ENCODE measurements at regions of chr13 and their contacts with region 1.

Region 1: GRCh38 chr13:52652196-52652979 is at the start of gene SUGT1:
- DNase-seq: peak; percentile 98
- H3K4me3 ChIP-seq: peak within 1 kb of the TSS; percentile 55 to 78
- H3K27ac ChIP-seq: peak within 1 kb of the TSS; percentile 96 to 97
- H3K4me1 ChIP-seq: peaks cover 12% of the 10 kb centered on the region
- H3K27me3 ChIP-seq: no peaks in the 10 kb centered on the region
- CTCF ChIP-seq: peak; percentile 15 to 66 (median 48)
- POLR2A ChIP-seq: peak; percentile 67
- total RNA-seq, gene SUGT1: 34.4 to 47.8 TPM

Region 2: DNA sequence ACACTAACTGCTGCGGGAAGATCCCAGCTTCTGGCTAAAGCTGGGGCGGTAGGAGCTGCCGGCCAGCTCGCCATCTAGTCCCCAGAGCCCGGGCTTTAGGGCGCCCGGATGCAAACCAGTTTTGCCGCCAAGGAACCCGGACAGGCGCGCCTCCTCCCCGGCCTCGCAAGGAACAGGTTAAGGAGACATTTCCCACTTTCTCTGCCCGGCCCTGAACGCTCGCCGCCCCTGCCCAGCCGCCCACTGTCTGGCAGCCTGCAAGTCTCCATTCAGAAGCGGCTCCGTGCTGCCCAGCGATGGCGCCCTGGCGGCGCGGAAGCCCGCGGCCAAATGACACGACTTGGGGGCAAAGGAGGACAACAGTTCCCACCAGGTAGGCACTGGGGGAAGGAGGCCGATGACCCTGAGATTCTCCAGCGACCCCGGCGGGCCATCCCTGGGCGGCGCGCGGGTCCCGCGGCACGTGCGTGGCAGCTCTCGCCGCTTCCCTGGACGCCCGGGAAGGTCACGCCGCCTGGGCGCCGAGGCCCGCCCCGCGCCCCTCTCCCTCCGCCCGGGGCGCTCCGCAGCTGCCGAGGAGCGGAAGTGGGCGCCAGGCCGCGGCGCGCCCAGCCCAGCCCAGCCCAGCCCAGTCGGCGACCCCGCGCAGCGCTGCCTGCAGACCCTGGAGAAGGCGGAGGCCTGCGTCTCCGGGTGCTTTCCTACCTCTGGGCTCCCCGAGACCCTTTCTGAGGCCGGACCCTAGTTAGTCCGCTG is 52.4 kb before region 1 on chr13:
- intact Hi-C with region 1: loop called (anchors 10 kb)
- DNase-seq: peak; percentile 33
- H3K4me3 ChIP-seq: peak overlapping the region; percentile 53 to 65
- H3K27ac ChIP-seq: peak overlapping the region; percentile 83 to 84
- H3K4me1 ChIP-seq: peaks cover 4% of the 10 kb centered on the region
- H3K27me3 ChIP-seq: no peaks in the 10 kb centered on the region
- CTCF ChIP-seq: peak in 2 of 4 experiments; percentile 5 to 7
- POLR2A ChIP-seq: no peak

Region 3: GRCh38 chr13:52617070-52618060 is 35.0 kb before region 1 on chr13:
- intact Hi-C with region 1: loop called (anchors 5 kb)
- DNase-seq: peak; percentile 65
- H3K4me3 ChIP-seq: peak overlapping the region; percentile 49 to 58
- H3K27ac ChIP-seq: peak overlapping the region; percentile 76 to 87
- H3K4me1 ChIP-seq: no peaks in the 10 kb centered on the region
- H3K27me3 ChIP-seq: no peaks in the 10 kb centered on the region
- CTCF ChIP-seq: no peak
- POLR2A ChIP-seq: no peak

Measured in prostate gland (tissue), 2 donors.